ENCODE measurements at regions of chr5 and their contacts with region 1.

Region 1: GRCh38 chr5:73498057-73499008 is at the start of gene BTF3:
- DNase-seq: peak; percentile 90
- ATAC-seq: peak; percentile 96
- H3K4me3 Mint-ChIP-seq: peak within 1 kb of the TSS; percentile 97
- H3K27ac Mint-ChIP-seq: peak within 1 kb of the TSS; percentile 99
- H3K4me1 Mint-ChIP-seq: peaks cover 33% of the 10 kb centered on the region
- H3K27me3 Mint-ChIP-seq: peaks cover 10% of the 10 kb centered on the region
- total RNA-seq, gene BTF3: 658 to 664 TPM

Region 2: DNA sequence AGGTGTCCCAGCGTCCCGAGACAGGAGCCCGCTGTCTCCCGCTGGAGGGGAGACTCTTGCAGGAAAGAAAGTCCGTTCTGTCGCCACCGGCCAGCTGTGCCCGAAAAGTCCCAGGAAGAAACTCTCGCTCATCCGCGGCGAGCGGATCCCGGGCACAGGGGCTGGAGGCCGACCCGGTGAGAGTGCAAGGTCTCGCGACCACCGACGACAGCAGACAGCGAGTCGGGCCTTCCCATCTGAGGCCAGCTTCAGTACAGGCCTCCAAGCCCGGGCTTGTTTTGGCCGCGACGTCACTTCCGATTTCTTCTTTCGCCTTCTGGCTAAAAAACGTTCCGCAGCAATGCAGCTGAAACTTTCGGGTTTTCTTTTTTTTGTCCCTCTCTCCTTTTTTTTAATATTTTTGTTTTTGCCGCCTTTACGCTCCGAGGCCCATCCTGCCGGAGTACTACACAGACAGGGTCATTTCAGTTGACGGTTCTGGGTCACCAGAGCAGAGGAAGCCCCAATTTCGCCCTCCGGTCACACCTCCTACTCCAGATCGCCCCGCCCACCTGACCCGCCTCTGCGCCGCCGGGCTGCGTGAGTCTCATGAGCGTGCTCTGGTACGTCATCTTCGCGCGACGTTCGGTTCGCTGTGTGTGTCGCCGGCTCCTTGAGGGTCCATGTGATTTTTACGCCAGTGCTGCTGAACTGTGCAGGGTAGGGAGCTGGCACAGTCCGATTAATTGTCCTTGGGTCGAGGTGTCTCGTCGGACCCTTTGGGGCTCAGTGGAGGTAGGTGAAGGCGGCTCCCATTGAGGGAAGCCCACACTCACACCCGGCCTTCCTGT is 67.0 kb after region 1 on chr5 and contains the starts of genes ANKRA2 and UTP15:
- POLR2A ChIA-PET with region 1: interaction called, 17 read pairs
- DNase-seq: peak; percentile 98
- ATAC-seq: peak; percentile 91
- H3K4me3 Mint-ChIP-seq: peak within 1 kb of the TSS; percentile 89
- H3K27ac Mint-ChIP-seq: peak within 1 kb of the TSS; percentile 98
- H3K4me1 Mint-ChIP-seq: peaks cover 23% of the 10 kb centered on the region
- H3K27me3 Mint-ChIP-seq: no peaks in the 10 kb centered on the region
- total RNA-seq, gene ANKRA2: 32.9 to 33.0 TPM
- total RNA-seq, gene UTP15: 21.6 to 22.4 TPM